HCT116 (cell line): ENCODE measurements at regions of chr4 and their contacts with region 1.

Region 1: GRCh38 chr4:157978680-157979361 is 194.0 kb downstream of the GASK1B start:
- DNase-seq: peak; percentile 66
- ATAC-seq: peak; percentile 99
- H3K4me3 ChIP-seq: peak overlapping the region in 1 of 2 experiments; percentile 36; a peak in 3 of 4 replicates
- H3K27ac ChIP-seq: no peak overlapping the region
- H3K4me1 ChIP-seq: no peaks in the 10 kb centered on the region
- H3K27me3 ChIP-seq: no peaks in the 10 kb centered on the region
- CTCF ChIP-seq: peak; percentile 69 to 88 (median 77)
- POLR2A ChIP-seq: no peak
- RAD21 ChIP-seq: peak; percentile 92

Region 2: DNA sequence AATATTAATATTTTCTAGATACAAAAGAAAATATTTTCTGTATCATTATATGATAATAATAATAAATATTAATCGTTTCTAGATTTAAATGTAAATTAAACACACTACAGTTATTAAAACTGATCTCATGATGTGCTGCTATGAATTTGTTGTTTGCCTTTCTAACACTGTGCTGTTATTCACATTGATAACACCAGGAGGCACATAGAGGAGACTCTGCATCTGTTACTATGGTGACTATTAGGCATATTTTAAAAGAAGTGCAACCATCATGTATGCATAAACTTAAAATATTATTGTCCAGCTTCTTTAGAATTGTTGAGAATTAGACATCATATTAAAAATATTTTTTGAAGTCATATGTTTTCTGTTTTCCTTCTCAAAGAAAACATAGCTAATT is 995.5 kb before region 1 on chr4:
- CTCF ChIA-PET with region 1: no interaction called
- POLR2A ChIA-PET with region 1: no interaction called
- RAD21 ChIA-PET with region 1: no interaction called
- intact Hi-C with region 1: loop called (anchors 5 kb)
- DNase-seq: no peak
- ATAC-seq: peak; percentile 59; the same call in 1 of the 2 replicates
- H3K4me3 ChIP-seq: no peak overlapping the region
- H3K27ac ChIP-seq: no peak overlapping the region
- H3K4me1 ChIP-seq: no peaks in the 10 kb centered on the region
- H3K27me3 ChIP-seq: no peaks in the 10 kb centered on the region
- CTCF ChIP-seq: peak; percentile 41 to 54 (median 51); a peak in 5 of 6 replicates
- POLR2A ChIP-seq: no peak
- RAD21 ChIP-seq: peak; percentile 49

Region 3: GRCh38 chr4:157220371-157220881 is 758.4 kb before region 1 on chr4 and contains the start of gene GRIA2:
- CTCF ChIA-PET with region 1: interaction called, 3 read pairs
- POLR2A ChIA-PET with region 1: no interaction called
- RAD21 ChIA-PET with region 1: no interaction called
- intact Hi-C with region 1: loop called (anchors 1 kb)
- DNase-seq: no peak
- ATAC-seq: no peak
- H3K4me3 ChIP-seq: no peak within 1 kb of the TSS
- H3K27ac ChIP-seq: no peak within 1 kb of the TSS
- H3K4me1 ChIP-seq: no peaks in the 10 kb centered on the region
- H3K27me3 ChIP-seq: no peaks in the 10 kb centered on the region
- CTCF ChIP-seq: no peak
- POLR2A ChIP-seq: no peak
- RAD21 ChIP-seq: no peak
- total RNA-seq, gene GRIA2: not detected

Region 4: GRCh38 chr4:157514711-157515110 is 464.1 kb before region 1 on chr4:
- CTCF ChIA-PET with region 1: interaction called, 3 read pairs
- POLR2A ChIA-PET with region 1: no interaction called
- RAD21 ChIA-PET with region 1: no interaction called
- intact Hi-C with region 1: loop called (anchors 10 kb)
- DNase-seq: no peak
- ATAC-seq: peak; percentile 57
- H3K4me3 ChIP-seq: no peak overlapping the region
- H3K27ac ChIP-seq: no peak overlapping the region
- H3K4me1 ChIP-seq: no peaks in the 10 kb centered on the region
- H3K27me3 ChIP-seq: no peaks in the 10 kb centered on the region
- CTCF ChIP-seq: peak; percentile 32 to 58 (median 49); a peak in 5 of 6 replicates
- POLR2A ChIP-seq: no peak
- RAD21 ChIP-seq: peak; percentile 34

Region 5: GRCh38 chr4:157576671-157577217 is 402.1 kb before region 1 on chr4:
- CTCF ChIA-PET with region 1: no interaction called
- POLR2A ChIA-PET with region 1: no interaction called
- RAD21 ChIA-PET with region 1: no interaction called
- intact Hi-C with region 1: no loop called
- DNase-seq: no peak
- ATAC-seq: no peak
- H3K4me3 ChIP-seq: no peak overlapping the region
- H3K27ac ChIP-seq: no peak overlapping the region
- H3K4me1 ChIP-seq: no peaks in the 10 kb centered on the region
- H3K27me3 ChIP-seq: no peaks in the 10 kb centered on the region
- CTCF ChIP-seq: no peak
- POLR2A ChIP-seq: no peak
- RAD21 ChIP-seq: no peak